ENCODE measurements at regions of chr5 and their contacts with region 1.

Region 1: DNA sequence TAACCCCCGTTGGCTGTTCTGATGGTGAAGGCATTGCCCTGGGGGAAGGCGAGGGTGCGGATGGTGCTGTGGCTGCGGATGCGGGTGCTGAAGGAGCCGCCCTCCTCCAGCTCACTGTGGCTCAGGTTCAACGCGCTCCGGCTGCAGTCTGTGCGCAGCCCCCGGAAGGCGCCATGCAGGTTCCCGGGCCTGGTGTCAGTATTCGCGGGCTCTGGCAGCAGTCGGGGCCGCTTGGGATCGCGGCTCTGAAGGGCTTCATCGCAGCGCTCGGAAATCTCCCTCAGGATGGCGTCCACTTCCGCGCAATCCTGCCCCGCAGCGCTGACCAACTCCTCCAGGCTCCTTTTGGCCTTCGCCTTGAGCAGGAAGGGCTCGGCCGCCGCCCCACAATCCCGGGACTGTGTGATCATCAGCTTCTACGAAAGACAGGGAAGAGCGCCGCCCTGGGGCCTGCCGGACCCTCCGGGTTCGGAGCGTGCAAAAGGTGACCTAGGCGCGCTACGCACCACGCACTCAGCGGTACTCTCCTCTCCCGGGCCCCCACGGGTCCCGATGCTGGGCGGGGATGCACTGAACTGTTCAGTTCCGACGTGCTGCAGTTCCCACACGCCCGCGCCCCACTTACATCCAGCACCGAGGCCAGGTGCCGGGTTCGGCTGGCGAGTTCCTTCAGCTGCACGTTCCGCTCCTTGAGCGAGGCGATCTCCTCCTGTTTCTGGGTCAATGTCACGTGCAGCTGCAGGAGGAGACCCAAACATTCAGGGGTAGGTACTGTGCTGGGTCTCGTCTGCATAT is 6.5 kb downstream of the MCIDAS start:
- DNase-seq: peak; percentile 73
- ATAC-seq: peak; percentile 85
- H3K4me3 Mint-ChIP-seq: peak overlapping the region; percentile 88
- H3K27ac Mint-ChIP-seq: no peak overlapping the region
- H3K4me1 Mint-ChIP-seq: peaks cover 51% of the 10 kb centered on the region
- H3K27me3 Mint-ChIP-seq: peaks cover 79% of the 10 kb centered on the region
- CTCF ChIP-seq: no peak

Region 2: DNA sequence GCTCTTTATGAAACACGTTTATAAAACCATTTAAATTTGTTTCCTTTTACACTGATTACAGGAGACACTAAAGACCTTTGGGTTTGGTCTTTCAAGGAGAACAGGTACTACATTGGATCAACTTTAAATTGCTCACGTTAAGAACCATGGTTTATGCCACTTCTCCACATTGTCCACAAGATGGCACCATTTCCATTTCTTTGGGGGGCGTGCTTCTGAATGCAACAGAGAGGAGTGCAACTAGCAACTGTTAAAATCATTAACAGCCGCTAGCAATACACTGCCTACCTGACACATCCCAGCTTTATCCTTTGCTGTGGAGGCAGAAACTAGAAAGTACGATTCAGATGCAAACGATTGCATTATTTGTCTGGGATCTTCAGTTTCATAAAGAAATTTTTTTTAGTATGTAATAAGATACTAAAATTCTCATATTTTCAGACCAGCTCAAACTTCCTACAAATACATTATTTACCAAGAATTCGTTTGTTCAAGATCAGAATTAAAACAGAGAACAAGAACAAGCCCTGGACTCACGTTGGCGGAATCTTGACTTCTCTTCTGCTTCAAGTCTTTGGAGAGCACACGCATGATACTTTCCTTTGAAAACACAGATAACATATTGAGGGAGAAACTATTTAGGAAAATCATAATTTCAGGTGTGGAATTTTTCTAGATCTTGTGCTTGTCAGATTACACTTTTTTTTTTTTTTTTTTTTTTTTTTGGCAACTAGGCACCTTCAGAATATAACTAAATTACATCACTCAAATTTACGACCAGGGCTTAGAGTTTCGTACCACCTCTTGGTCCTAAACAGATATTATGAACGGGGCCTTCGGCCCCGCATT is 48.3 kb before region 1 on chr5:
- CTCF ChIA-PET with region 1: interaction called, 35 read pairs
- POLR2A ChIA-PET with region 1: no interaction called
- DNase-seq: peak; percentile 26
- ATAC-seq: peak; percentile 9
- H3K4me3 Mint-ChIP-seq: peak overlapping the region; percentile 74
- H3K27ac Mint-ChIP-seq: no peak overlapping the region
- H3K4me1 Mint-ChIP-seq: peaks cover 33% of the 10 kb centered on the region
- H3K27me3 Mint-ChIP-seq: peaks cover 66% of the 10 kb centered on the region
- CTCF ChIP-seq: peak; percentile 56

Region 3: DNA sequence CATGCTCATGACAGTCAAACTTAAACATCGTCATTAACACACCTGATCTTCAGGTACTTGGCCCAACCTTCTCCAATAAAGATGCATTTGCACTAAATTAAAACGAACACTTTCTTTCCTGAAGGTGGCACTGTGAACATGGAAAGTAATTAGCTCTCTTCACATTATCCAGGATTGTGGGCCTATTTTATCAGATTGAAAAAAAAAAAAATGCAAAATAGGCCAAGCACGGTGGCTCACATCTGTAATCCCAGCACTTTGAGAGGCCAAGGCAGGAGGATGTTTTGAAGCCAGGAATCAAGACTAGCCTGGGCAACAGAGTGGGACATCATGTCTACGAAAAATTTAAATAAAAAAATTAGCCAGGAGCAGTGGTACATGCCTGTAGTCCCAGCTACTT is 33.2 kb before region 1 on chr5:
- CTCF ChIA-PET with region 1: interaction called, 11 read pairs
- POLR2A ChIA-PET with region 1: no interaction called
- DNase-seq: no peak
- ATAC-seq: peak; percentile 60
- H3K4me3 Mint-ChIP-seq: no peak overlapping the region
- H3K27ac Mint-ChIP-seq: no peak overlapping the region
- H3K4me1 Mint-ChIP-seq: no peaks in the 10 kb centered on the region
- H3K27me3 Mint-ChIP-seq: peaks cover 61% of the 10 kb centered on the region
- CTCF ChIP-seq: no peak

Region 4: GRCh38 chr5:55205001-55205400 is 15.6 kb before region 1 on chr5:
- CTCF ChIA-PET with region 1: no interaction called
- POLR2A ChIA-PET with region 1: no interaction called
- DNase-seq: no peak
- ATAC-seq: no peak
- H3K4me3 Mint-ChIP-seq: no peak overlapping the region
- H3K27ac Mint-ChIP-seq: no peak overlapping the region
- H3K4me1 Mint-ChIP-seq: no peaks in the 10 kb centered on the region
- H3K27me3 Mint-ChIP-seq: peaks cover 41% of the 10 kb centered on the region
- CTCF ChIP-seq: no peak

Region 5: DNA sequence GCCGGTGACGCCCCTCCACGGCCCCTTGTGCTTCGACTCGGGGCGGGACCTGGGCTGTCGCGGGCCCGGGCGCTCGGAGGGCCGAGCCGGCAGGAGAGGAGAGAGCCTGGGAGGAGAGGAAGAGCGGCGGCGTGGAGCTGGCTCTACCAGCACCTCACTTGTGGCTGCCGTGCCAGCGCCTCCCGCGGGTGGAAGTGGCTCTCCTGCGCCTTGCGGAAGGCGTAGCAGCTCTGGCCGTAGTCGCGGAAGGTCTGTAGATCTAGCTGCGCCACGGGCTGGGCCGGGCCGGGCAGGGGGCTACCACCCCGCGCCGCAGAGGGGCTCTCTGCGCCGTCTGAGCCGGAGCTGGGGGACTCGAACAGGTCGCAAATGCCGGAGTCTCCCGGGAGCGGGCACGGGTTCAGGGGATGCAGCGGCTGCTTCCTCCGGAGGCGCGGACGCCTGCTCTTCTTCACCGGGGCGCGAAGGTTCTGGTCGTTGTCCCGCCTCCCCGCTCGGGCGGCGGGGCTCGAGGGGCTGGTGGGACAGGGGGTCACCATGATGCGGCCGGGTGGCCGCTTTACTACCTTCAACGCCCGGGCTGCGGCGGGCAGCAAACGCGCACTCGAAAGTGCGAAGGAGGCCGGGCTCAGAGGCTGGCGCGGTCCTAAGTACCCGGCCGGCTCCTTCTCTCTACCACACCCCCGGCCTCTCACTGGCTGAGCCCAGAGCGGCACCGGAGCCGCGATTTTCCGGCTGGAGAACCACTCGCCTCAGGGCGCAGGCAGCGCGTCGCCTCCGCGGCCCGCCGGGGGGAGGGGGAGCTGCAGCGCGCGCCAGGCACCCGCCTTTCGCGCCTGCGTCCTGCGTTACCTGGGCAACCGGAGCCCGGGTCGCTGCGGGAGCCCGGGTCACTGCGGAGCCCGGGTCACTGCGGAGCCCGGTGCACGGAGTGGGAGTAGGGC is 12.7 kb after region 1 on chr5 and contains the start of gene CCNO:
- CTCF ChIA-PET with region 1: interaction called, 31 read pairs
- POLR2A ChIA-PET with region 1: interaction called, 7 read pairs
- DNase-seq: peak; percentile 84
- ATAC-seq: peak; percentile 80
- H3K4me3 Mint-ChIP-seq: peak within 1 kb of the TSS; percentile 86
- H3K27ac Mint-ChIP-seq: no peak within 1 kb of the TSS
- H3K4me1 Mint-ChIP-seq: peaks cover 29% of the 10 kb centered on the region
- H3K27me3 Mint-ChIP-seq: peaks cover 98% of the 10 kb centered on the region
- CTCF ChIP-seq: no peak
- total RNA-seq, gene CCNO: 0.14 to 0.44 TPM (median 0.24 TPM) in 3 replicates

Region 6: DNA sequence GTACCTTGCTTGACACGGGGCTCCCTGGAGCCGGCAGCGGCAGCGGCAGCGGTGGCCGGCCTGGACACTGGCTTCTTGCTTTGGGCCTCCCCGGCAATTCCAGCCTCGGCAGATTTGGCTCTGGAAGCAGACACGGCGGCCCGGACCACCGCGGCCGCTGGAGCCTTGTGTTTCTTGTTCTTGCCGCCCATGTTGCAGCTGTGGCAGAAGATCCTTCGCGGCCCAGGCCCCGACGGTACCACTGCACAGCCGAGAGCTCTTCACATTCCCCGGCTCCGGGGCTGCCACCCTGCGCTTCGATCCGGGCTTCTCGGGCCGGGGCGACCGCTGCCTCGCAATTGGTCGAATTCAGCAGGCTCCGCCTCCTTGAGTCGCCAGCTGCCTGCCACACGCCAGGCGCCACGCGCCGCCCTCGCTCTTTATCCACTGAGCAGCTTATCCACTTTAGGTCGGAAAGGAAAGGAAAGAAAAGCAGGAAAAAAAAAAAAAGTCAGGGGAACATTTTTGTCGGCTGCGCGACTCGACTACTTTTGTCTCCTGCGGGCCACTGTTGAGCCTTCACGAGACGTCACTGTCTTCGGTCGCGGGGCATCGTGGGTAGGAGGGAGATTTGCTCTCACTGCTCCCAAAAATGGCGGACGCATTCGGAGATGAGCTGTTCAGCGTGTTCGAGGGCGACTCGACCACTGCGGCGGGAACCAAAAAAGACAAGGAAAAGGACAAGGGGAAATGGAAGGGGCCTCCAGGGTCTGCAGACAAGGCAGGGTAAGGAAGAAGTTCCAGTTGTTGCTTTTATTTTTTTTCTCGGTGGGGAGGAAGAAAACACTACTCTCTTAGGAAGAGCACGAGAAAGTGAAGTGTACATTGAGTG is 87.0 kb after region 1 on chr5 and contains the starts of genes DHX29 and MTREX:
- CTCF ChIA-PET with region 1: no interaction called
- POLR2A ChIA-PET with region 1: no interaction called
- DNase-seq: peak; percentile 90
- ATAC-seq: peak; percentile 97
- H3K4me3 Mint-ChIP-seq: no peak within 1 kb of the TSS
- H3K27ac Mint-ChIP-seq: no peak within 1 kb of the TSS
- H3K4me1 Mint-ChIP-seq: peaks cover 13% of the 10 kb centered on the region
- H3K27me3 Mint-ChIP-seq: no peaks in the 10 kb centered on the region
- CTCF ChIP-seq: no peak
- total RNA-seq, gene DHX29: 24.9 to 29.7 TPM (median 25.7 TPM) in 3 replicates
- total RNA-seq, gene MTREX: 107 to 113 TPM (median 110 TPM) in 3 replicates